ENCODE measurements at regions of chr13 and their contacts with region 1.

Region 1: DNA sequence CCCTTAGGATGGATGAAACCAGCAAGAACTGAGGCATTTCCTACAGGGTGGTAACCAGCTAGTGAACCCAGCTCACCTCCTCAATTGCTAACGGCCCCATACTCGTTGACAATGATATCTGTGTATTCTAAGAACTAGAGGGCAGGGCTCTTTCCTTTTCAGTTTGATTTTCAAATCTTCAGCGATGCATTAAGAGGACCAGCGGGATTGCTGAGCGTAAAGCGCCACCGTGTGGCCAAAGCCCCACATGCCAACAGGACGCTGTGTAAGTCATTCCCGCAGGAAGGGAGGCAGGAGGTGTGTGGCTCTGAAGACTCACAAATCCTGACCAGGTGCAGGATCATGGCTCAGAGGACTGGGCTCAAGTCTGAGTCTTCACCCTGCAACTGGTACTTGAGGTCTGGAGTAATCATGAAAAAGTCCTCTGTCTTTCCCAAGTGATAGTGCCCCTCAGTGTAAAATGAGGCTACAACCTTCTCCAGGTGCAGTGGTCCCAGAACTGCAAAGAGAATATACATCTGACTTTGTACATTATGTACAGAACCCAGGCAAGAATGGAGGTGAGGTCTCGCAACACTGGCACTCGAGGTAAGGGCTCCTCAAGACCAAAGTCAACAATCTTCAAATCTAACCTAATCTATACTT is 40.9 kb downstream of the C13orf42 start:
- DNase-seq: peak; percentile 71 to 86
- ATAC-seq: peak; percentile 66 to 76 (median 73)
- H3K4me3 ChIP-seq: no peak overlapping the region
- H3K4me3 Mint-ChIP-seq: no peak overlapping the region
- H3K27ac ChIP-seq: no peak overlapping the region
- H3K27ac Mint-ChIP-seq: no peak overlapping the region
- H3K4me1 ChIP-seq: peaks cover 26% of the 10 kb centered on the region
- H3K4me1 Mint-ChIP-seq: peaks cover 14 to 17% of the 10 kb centered on the region in 2 donors
- H3K27me3 ChIP-seq: no peaks in the 10 kb centered on the region
- H3K27me3 Mint-ChIP-seq: peaks cover 9 to 21% of the 10 kb centered on the region in 2 donors
- CTCF ChIP-seq: peak; percentile 92

Region 2: GRCh38 chr13:49300739-49301589 is 1769.2 kb before region 1 on chr13:
- intact Hi-C with region 1: loop called (anchors 10 kb)
- DNase-seq: peak; percentile 47 to 85
- ATAC-seq: peak; percentile 92 to 100 (median 99)
- H3K4me3 ChIP-seq: peak overlapping the region; percentile 28
- H3K4me3 Mint-ChIP-seq: peak overlapping the region; percentile 81
- H3K27ac ChIP-seq: no peak overlapping the region
- H3K27ac Mint-ChIP-seq: peak overlapping the region in 1 of 2 donors; percentile 82
- H3K4me1 ChIP-seq: peaks cover 6% of the 10 kb centered on the region
- H3K4me1 Mint-ChIP-seq: peaks cover 13 to 18% of the 10 kb centered on the region in 2 donors
- H3K27me3 ChIP-seq: no peaks in the 10 kb centered on the region
- H3K27me3 Mint-ChIP-seq: no peaks in the 10 kb centered on the region
- CTCF ChIP-seq: peak; percentile 82

Region 3: GRCh38 chr13:49976314-49977258 is 1093.5 kb before region 1 on chr13:
- intact Hi-C with region 1: loop called (anchors 1 kb)
- DNase-seq: peak; percentile 69 to 93
- ATAC-seq: peak; percentile 82 to 87 (median 83)
- H3K4me3 ChIP-seq: no peak overlapping the region
- H3K4me3 Mint-ChIP-seq: no peak overlapping the region
- H3K27ac ChIP-seq: no peak overlapping the region
- H3K27ac Mint-ChIP-seq: no peak overlapping the region
- H3K4me1 ChIP-seq: no peaks in the 10 kb centered on the region
- H3K4me1 Mint-ChIP-seq: no peaks in the 10 kb centered on the region
- H3K27me3 ChIP-seq: no peaks in the 10 kb centered on the region
- H3K27me3 Mint-ChIP-seq: no peaks in the 10 kb centered on the region
- CTCF ChIP-seq: peak; percentile 87

Region 4: GRCh38 chr13:50069261-50069660 is 1000.9 kb before region 1 on chr13:
- intact Hi-C with region 1: no loop called
- DNase-seq: no peak
- ATAC-seq: no peak
- H3K4me3 ChIP-seq: no peak overlapping the region
- H3K4me3 Mint-ChIP-seq: no peak overlapping the region
- H3K27ac ChIP-seq: no peak overlapping the region
- H3K27ac Mint-ChIP-seq: peak overlapping the region; percentile 62 to 86
- H3K4me1 ChIP-seq: peaks cover 4% of the 10 kb centered on the region
- H3K4me1 Mint-ChIP-seq: peaks cover 50 to 52% of the 10 kb centered on the region in 2 donors
- H3K27me3 ChIP-seq: no peaks in the 10 kb centered on the region
- H3K27me3 Mint-ChIP-seq: no peaks in the 10 kb centered on the region
- CTCF ChIP-seq: no peak

Region 5: GRCh38 chr13:50801087-50801931 is 268.8 kb before region 1 on chr13:
- intact Hi-C with region 1: loop called (anchors 10 kb)
- DNase-seq: peak; percentile 36 to 86
- ATAC-seq: peak; percentile 91 to 98 (median 97)
- H3K4me3 ChIP-seq: no peak overlapping the region
- H3K4me3 Mint-ChIP-seq: no peak overlapping the region
- H3K27ac ChIP-seq: peak overlapping the region; percentile 4
- H3K27ac Mint-ChIP-seq: no peak overlapping the region
- H3K4me1 ChIP-seq: peaks cover 7% of the 10 kb centered on the region
- H3K4me1 Mint-ChIP-seq: peaks cover 0 to 6% of the 10 kb centered on the region in 2 donors
- H3K27me3 ChIP-seq: no peaks in the 10 kb centered on the region
- H3K27me3 Mint-ChIP-seq: peaks cover 7 to 9% of the 10 kb centered on the region in 2 donors
- CTCF ChIP-seq: peak; percentile 80